Right cardiac atrium (tissue), 5 donors: ENCODE measurements at regions of chr11 and their contacts with region 1.

Region 1: GRCh38 chr11:2860636-2861035 is 24.9 kb downstream of the CDKN1C start:
- DNase-seq: no peak
- ATAC-seq: no peak
- H3K4me3 ChIP-seq: no peak overlapping the region
- H3K27ac ChIP-seq: no peak overlapping the region
- H3K4me1 ChIP-seq: no peaks in the 10 kb centered on the region
- H3K27me3 ChIP-seq: no peaks in the 10 kb centered on the region

Region 2: GRCh38 chr11:2699531-2700414 is 160.9 kb before region 1 on chr11 and contains the start of gene KCNQ1OT1:
- intact Hi-C with region 1: loop called in 1 of 4 experiments (anchors 10 kb)
- DNase-seq: peak; percentile 91 to 96 (median 96)
- ATAC-seq: peak; percentile 96 to 97
- H3K4me3 ChIP-seq: peak within 1 kb of the TSS; percentile 59
- H3K27ac ChIP-seq: peak within 1 kb of the TSS; percentile 64
- H3K4me1 ChIP-seq: peaks cover under 1% of the 10 kb centered on the region
- H3K27me3 ChIP-seq: no peaks in the 10 kb centered on the region
- total RNA-seq, gene KCNQ1OT1: 0.51 to 0.78 (median 0.55) TPM